GM12878 (cell line): ENCODE measurements at regions of chr1 and their contacts with region 1.

Region 1: GRCh38 chr1:24201941-24202440 is 14.9 kb upstream of the IFNLR1 start:
- DNase-seq: no peak
- ATAC-seq: peak; percentile 41
- H3K4me3 ChIP-seq: no peak overlapping the region
- H3K27ac ChIP-seq: no peak overlapping the region
- H3K4me1 ChIP-seq: peaks cover 28% of the 10 kb centered on the region
- H3K27me3 ChIP-seq: no peaks in the 10 kb centered on the region; a peak in 1 of 4 replicates
- CTCF ChIP-seq: peak; percentile 78 to 85 (median 82); a peak in 5 of 6 replicates
- EP300 ChIP-seq: no peak
- POLR2A ChIP-seq: no peak
- RAD21 ChIP-seq: peak; percentile 94

Region 2: GRCh38 chr1:24150234-24151174 is 51.5 kb before region 1 on chr1:
- CTCF ChIA-PET with region 1: interaction called, 83 read pairs
- POLR2A ChIA-PET with region 1: interaction called, 3 read pairs
- RAD21 ChIA-PET with region 1: interaction called, 31 read pairs
- SMC1A ChIA-PET with region 1: interaction called, 30 read pairs
- in situ Hi-C with region 1: no loop called
- intact Hi-C with region 1: loop called (anchors 2 kb)
- DNase-seq: peak; percentile 24
- ATAC-seq: peak; percentile 98
- H3K4me3 ChIP-seq: no peak overlapping the region
- H3K27ac ChIP-seq: no peak overlapping the region
- H3K4me1 ChIP-seq: peaks cover 11% of the 10 kb centered on the region
- H3K27me3 ChIP-seq: peaks cover 3 to 4% of the 10 kb centered on the region in 2 experiments; a peak in 3 of 4 replicates
- CTCF ChIP-seq: peak; percentile 76 to 93 (median 87)
- EP300 ChIP-seq: no peak
- POLR2A ChIP-seq: no peak
- RAD21 ChIP-seq: peak; percentile 91

Region 3: GRCh38 chr1:24186993-24187805 is 14.8 kb before region 1 on chr1 and contains the start of gene IFNLR1:
- CTCF ChIA-PET with region 1: interaction called, 64 read pairs
- POLR2A ChIA-PET with region 1: no interaction called
- RAD21 ChIA-PET with region 1: interaction called, 15 read pairs
- SMC1A ChIA-PET with region 1: interaction called, 25 read pairs
- in situ Hi-C with region 1: no loop called
- intact Hi-C with region 1: no loop called
- DNase-seq: no peak
- ATAC-seq: peak; percentile 52
- H3K4me3 ChIP-seq: peak within 1 kb of the TSS; percentile 71; the same call in 1 of the 2 replicates
- H3K27ac ChIP-seq: peak within 1 kb of the TSS; percentile 5; the same call in 1 of the 2 replicates
- H3K4me1 ChIP-seq: peaks cover 47% of the 10 kb centered on the region
- H3K27me3 ChIP-seq: peaks cover 0 to 4% of the 10 kb centered on the region in 2 experiments; a peak in 2 of 4 replicates
- CTCF ChIP-seq: no peak
- EP300 ChIP-seq: no peak
- POLR2A ChIP-seq: peak; percentile 68
- RAD21 ChIP-seq: no peak
- polyA plus RNA-seq, gene IFNLR1: 0.31 to 0.88 TPM

Region 4: DNA sequence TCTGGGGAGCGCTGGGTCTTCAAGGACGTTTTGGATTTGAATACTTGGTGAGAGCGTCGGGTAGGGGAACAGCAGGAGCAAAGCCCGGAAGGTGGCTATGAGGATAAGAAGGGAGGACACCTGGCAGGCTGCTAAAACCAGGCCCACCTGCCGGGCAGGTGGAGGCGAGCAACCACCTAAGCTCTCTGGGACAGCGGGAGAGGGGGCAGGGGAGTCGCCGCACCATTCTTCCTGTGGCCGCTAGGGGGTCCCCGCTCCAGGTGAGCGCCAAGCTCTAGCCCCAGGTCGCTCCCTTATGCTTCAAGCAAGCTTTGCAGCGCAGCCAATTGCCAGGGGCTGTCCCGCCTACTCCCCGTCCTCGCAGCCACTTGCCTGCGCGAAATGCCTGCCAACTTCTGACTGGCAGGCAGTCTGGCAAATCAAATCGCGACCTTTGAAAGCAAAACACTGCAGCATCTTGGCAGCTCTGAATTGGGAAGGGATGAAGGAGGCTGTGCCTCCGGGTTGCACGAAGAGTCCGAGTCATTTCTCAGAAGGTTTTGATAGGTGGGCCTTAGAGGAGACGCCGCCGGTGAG is 213.4 kb after region 1 on chr1 and contains the start of gene NIPAL3:
- CTCF ChIA-PET with region 1: interaction called, 15 read pairs
- POLR2A ChIA-PET with region 1: no interaction called
- RAD21 ChIA-PET with region 1: interaction called, 6 read pairs
- SMC1A ChIA-PET with region 1: interaction called, 3 read pairs
- in situ Hi-C with region 1: no loop called
- intact Hi-C with region 1: no loop called
- DNase-seq: peak; percentile 98
- ATAC-seq: peak; percentile 99
- H3K4me3 ChIP-seq: peak within 1 kb of the TSS; percentile 80
- H3K27ac ChIP-seq: 0 out of 2 replicates have a peak within 1 kb of the TSS, but pooled peaks have one; percentile 0
- H3K4me1 ChIP-seq: peaks cover 9% of the 10 kb centered on the region
- H3K27me3 ChIP-seq: no peaks in the 10 kb centered on the region
- CTCF ChIP-seq: peak; percentile 91 to 95 (median 94)
- EP300 ChIP-seq: no peak
- POLR2A ChIP-seq: peak; percentile 40; the same call in 1 of the 2 replicates
- RAD21 ChIP-seq: peak; percentile 49
- polyA plus RNA-seq, gene NIPAL3: 2.1 TPM

Region 5: DNA sequence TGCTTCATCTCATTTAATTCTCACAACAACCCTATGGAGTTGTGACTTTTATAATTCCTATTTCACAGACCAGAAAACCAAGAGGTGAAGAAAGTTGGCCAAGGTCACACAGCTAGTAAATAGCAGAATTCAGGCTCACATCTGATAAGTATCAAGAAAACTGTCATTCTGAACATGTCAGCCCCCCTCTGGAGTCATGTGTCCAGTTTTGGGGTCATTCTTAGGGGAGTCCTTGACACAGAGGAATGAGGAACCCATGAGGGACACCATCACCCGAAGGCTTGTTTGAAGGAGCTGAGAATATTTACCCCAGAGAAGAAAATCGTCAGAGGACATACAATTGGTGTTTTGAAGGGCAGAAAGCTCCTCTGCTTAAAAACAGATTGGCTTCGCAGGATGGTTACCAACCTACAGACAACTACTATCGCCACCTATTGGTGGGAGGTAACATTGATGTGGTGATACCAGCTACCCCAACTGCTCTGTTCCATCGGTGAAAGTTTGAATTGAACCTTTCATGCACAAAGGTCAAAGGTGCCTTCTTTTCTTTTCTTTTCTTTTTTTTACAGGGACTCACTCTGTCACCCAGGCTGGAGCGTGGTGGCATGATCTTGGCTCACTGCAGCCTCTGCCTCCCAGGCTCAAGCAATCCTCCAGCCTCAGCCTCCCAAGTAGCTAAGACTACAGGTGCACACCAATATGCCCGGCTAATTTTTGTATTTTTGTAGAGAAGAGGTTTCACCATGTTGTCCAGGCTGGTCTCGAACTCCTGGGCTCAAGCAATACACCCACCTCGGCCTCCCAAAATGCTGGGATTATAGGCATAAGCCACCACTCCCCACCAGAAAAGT is 385.2 kb after region 1 on chr1:
- CTCF ChIA-PET with region 1: interaction called, 12 read pairs
- POLR2A ChIA-PET with region 1: no interaction called
- RAD21 ChIA-PET with region 1: interaction called, 15 read pairs
- SMC1A ChIA-PET with region 1: interaction called, 8 read pairs
- in situ Hi-C with region 1: no loop called
- intact Hi-C with region 1: loop called (anchors 1 kb)
- DNase-seq: no peak
- ATAC-seq: peak; percentile 98
- H3K4me3 ChIP-seq: no peak overlapping the region
- H3K27ac ChIP-seq: no peak overlapping the region
- H3K4me1 ChIP-seq: no peaks in the 10 kb centered on the region
- H3K27me3 ChIP-seq: peaks cover 2 to 5% of the 10 kb centered on the region in 2 experiments; a peak in 2 of 4 replicates
- CTCF ChIP-seq: peak; percentile 78 to 84 (median 78)
- EP300 ChIP-seq: no peak
- POLR2A ChIP-seq: no peak
- RAD21 ChIP-seq: peak; percentile 75